Activated CD4-positive, alpha-beta T cell treated with anti-CD3 and anti-CD28 coated beads for 36 hours (primary cell): ENCODE measurements at regions of chr6 and their contacts with region 1.

Region 1: DNA sequence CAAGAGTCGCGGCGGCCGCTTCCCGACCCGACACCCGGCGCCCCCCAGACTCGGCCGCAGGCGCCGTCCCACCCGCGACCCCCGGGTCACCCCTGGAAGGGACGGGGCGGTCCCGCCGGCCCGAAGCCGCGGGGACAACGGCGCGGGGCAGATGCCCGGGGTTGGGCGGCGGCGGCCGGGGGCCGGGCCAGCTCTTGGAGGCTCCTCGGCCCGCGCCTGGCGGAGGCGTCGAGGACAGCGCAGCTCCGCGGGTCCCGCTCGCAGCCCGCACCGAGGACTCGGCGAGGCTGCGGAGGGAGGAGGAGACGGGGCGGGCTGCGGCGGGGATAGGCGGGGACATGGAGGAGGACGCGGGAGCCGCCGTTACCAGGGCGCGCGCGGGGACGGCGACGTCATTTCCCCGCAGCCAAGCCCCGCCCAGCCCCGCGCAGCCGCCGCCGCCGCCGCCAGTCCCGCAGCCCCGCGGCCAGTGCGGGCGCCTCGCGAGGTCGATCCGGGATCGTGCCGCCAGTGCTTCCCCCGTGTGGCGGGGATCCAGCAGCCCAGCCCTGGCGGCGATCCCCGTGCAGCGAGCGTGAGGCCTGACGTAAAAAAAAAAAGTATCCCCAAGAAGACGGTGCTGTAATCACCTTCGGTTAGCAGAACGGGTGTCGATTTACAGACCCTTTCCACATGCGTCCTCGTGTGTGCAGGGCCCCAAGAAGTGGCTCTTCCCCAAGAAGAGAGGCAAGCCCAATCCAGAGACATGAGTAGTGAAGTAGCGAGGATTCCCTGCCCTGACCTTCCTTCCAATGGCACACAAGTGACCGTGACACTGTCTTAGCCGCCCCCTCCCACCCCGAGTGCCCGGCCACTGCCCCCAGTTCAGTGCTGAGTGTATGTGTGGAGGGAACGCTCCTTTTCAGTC is at the start of gene FAM184A:
- DNase-seq: peak; percentile 82
- ATAC-seq: peak; percentile 37
- H3K4me3 Mint-ChIP-seq: peak within 1 kb of the TSS; percentile 77
- H3K27ac Mint-ChIP-seq: peak within 1 kb of the TSS; percentile 94
- H3K4me1 Mint-ChIP-seq: peaks cover 46% of the 10 kb centered on the region
- H3K27me3 Mint-ChIP-seq: no peaks in the 10 kb centered on the region
- total RNA-seq, gene FAM184A: 13.8 to 14.5 TPM

Region 2: DNA sequence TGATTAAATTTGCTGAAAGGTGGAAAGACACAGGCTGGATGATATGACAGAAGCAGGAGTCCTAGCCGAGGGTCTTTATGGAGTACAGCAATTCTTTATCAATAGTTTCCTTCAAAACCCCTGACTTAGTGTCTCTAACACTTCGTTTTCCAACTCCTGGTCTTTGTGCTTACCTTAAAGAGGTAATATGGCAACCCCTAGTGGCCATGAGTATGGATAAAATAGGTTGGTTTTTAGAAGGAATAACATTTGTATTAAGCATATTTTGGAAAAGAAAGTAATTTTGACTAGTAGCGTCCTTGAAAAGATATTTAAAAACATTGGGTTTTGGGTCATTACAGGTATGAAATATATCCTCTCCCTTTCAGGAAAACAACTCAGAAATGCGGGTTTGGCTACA is 1761.4 kb before region 1 on chr6:
- CTCF ChIA-PET with region 1: no interaction called
- POLR2A ChIA-PET with region 1: no interaction called
- intact Hi-C with region 1: no loop called
- DNase-seq: no peak
- ATAC-seq: no peak
- H3K4me3 Mint-ChIP-seq: no peak overlapping the region
- H3K27ac Mint-ChIP-seq: no peak overlapping the region
- H3K4me1 Mint-ChIP-seq: no peaks in the 10 kb centered on the region
- H3K27me3 Mint-ChIP-seq: peaks cover 13% of the 10 kb centered on the region

Region 3: GRCh38 chr6:118651282-118652050 is 427.2 kb before region 1 on chr6 and contains the start of gene CEP85L:
- CTCF ChIA-PET with region 1: no interaction called
- POLR2A ChIA-PET with region 1: no interaction called
- intact Hi-C with region 1: loop called (anchors 2 to 10 kb)
- DNase-seq: peak; percentile 96
- ATAC-seq: peak; percentile 93
- H3K4me3 Mint-ChIP-seq: peak within 1 kb of the TSS; percentile 85
- H3K27ac Mint-ChIP-seq: peak within 1 kb of the TSS; percentile 94
- H3K4me1 Mint-ChIP-seq: peaks cover 50% of the 10 kb centered on the region
- H3K27me3 Mint-ChIP-seq: no peaks in the 10 kb centered on the region
- total RNA-seq, gene CEP85L: 29.5 to 29.7 TPM

Region 4: DNA sequence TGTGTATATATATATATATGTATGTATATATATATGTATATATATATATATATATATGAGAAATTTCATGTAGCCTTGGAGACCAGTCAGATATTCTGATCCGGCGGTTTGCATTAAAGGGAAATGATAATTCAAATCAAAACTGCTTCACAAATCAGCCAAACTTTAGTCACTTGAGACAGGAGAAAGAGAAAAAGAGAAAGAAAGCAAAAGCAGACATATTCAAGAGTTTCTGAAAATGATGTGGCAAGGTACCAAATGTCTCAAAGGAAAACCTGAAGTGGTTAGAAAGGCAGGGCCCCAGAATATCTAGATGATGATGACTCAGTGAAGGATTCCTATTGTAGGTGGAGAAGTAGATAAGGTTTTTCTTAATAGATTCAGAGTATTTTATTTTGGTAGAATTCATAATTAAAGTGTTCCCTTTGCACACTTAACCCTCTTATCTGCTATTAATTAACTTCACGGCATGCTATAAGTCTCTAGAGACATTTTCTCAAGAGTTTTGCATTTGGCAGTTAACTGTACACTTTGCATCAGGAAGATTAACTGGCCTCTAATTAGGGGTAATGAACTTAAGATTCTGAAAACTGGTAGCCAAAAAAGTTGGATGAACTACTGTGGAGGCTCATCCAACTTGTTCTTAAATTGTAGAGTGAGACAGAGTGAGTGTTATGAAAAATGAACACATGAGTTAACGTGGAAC is 234.8 kb before region 1 on chr6:
- CTCF ChIA-PET with region 1: no interaction called
- POLR2A ChIA-PET with region 1: no interaction called
- intact Hi-C with region 1: loop called (anchors 2 kb)
- DNase-seq: peak; percentile 49
- ATAC-seq: peak; percentile 87
- H3K4me3 Mint-ChIP-seq: no peak overlapping the region
- H3K27ac Mint-ChIP-seq: peak overlapping the region; percentile 48
- H3K4me1 Mint-ChIP-seq: peaks cover 26% of the 10 kb centered on the region
- H3K27me3 Mint-ChIP-seq: no peaks in the 10 kb centered on the region

Region 5: DNA sequence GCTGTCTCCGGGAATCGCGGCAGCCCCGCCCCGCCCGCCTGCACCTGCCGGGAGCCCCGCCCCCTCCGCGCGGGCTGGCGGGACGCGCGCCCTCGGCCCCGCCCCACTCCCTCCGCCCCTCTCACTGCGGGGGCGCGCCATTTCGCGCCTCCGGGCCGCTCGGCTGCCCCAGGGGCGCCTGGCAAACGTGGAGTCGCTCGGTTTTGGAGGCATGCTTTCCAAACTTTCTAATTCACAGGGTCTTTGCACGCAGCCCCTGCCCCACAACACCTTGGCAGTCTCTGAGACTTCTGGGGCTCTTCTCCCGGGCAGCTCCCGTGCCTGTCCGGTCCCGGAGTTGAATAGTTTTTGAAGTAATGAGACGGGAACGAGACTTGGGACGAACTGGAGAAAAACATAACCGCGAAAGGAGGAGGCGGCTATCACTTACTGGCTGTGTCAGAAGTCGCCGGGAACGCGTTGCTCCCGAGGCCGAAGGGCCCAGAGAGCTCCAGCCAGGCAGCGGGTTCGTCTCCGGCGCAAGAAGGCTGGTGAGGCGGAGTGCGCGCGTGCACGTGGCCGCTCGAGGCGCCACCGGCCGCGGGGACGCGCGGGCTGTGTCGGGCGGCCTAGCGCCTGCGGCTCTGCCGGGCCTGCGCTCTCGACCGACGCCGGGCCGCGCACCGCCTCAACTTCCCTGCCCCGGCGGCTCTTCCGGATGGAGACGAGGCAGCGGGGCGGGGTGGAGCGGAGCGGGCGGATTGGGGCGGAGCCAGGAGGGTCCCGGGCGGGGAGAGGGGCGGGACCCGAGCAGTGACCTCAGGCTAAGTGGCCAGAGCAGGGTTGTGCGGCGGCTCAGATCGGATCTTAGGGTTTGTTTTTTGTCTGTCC is 143.9 kb before region 1 on chr6 and contains the start of gene MCM9:
- CTCF ChIA-PET with region 1: interaction called, 4 read pairs
- POLR2A ChIA-PET with region 1: no interaction called
- intact Hi-C with region 1: loop called (anchors 1 to 2 kb)
- DNase-seq: peak; percentile 94
- ATAC-seq: peak; percentile 97
- H3K4me3 Mint-ChIP-seq: peak within 1 kb of the TSS; percentile 87
- H3K27ac Mint-ChIP-seq: peak within 1 kb of the TSS; percentile 94
- H3K4me1 Mint-ChIP-seq: peaks cover 35% of the 10 kb centered on the region
- H3K27me3 Mint-ChIP-seq: no peaks in the 10 kb centered on the region
- total RNA-seq, gene MCM9: 17.0 to 17.2 TPM

Region 6: GRCh38 chr6:119030759-119031158 is 47.9 kb before region 1 on chr6:
- CTCF ChIA-PET with region 1: no interaction called
- POLR2A ChIA-PET with region 1: no interaction called
- intact Hi-C with region 1: no loop called
- DNase-seq: no peak
- ATAC-seq: no peak
- H3K4me3 Mint-ChIP-seq: no peak overlapping the region
- H3K27ac Mint-ChIP-seq: no peak overlapping the region
- H3K4me1 Mint-ChIP-seq: no peaks in the 10 kb centered on the region
- H3K27me3 Mint-ChIP-seq: no peaks in the 10 kb centered on the region

Region 7: GRCh38 chr6:119043783-119044182 is 34.8 kb before region 1 on chr6:
- CTCF ChIA-PET with region 1: interaction called, 3 read pairs
- POLR2A ChIA-PET with region 1: no interaction called
- intact Hi-C with region 1: loop called (anchors 5 kb)
- DNase-seq: no peak
- ATAC-seq: peak; percentile 52
- H3K4me3 Mint-ChIP-seq: no peak overlapping the region
- H3K27ac Mint-ChIP-seq: peak overlapping the region; percentile 6
- H3K4me1 Mint-ChIP-seq: peaks cover 28% of the 10 kb centered on the region
- H3K27me3 Mint-ChIP-seq: no peaks in the 10 kb centered on the region

Region 8: DNA sequence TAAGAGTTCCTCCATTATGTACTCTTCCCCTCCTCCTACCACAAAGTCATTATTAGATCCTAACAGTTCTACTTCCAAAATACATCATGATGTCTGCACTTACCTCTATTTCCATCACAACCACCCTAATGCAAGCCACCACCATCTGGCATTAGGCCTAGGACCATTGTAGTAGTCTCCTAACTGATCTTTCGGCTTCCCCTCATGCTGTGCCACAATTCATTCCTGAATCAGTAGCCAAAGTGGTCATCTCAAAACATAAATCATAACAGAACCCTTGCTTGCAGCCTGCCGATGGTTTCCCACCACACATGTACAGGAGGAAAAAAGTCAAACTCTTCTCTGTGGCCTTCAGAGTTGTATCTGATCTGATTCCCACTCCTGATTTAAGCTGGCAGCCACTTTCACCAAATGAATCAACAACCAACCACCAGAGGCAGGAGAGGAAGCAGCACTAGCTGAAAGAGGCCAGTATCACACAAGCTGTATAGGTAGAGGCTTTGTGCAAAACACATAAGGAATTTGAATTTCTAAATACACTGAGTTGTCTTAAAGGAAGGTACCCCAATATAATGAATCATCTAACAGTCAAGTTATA is 26.2 kb before region 1 on chr6:
- CTCF ChIA-PET with region 1: interaction called, 4 read pairs
- POLR2A ChIA-PET with region 1: interaction called, 4 read pairs
- intact Hi-C with region 1: loop called (anchors 1 kb)
- DNase-seq: peak; percentile 66
- ATAC-seq: peak; percentile 95
- H3K4me3 Mint-ChIP-seq: no peak overlapping the region
- H3K27ac Mint-ChIP-seq: peak overlapping the region; percentile 66
- H3K4me1 Mint-ChIP-seq: peaks cover 26% of the 10 kb centered on the region
- H3K27me3 Mint-ChIP-seq: no peaks in the 10 kb centered on the region